Naive thymus-derived CD4-positive, alpha-beta T cell (primary cell): ENCODE measurements at regions of chr13 and their contacts with region 1.

Region 1: GRCh38 chr13:75635828-75636435 is at the start of gene LMO7:
- DNase-seq: peak; percentile 39 to 60 (median 44)
- ATAC-seq: peak; percentile 69
- H3K4me3 ChIP-seq: peak within 1 kb of the TSS; percentile 75
- H3K4me3 Mint-ChIP-seq: peak within 1 kb of the TSS; percentile 77 to 91 (median 85)
- H3K27ac ChIP-seq: peak within 1 kb of the TSS; percentile 34
- H3K27ac Mint-ChIP-seq: peak within 1 kb of the TSS; percentile 38 to 82 (median 71)
- H3K4me1 ChIP-seq: no peaks in the 10 kb centered on the region
- H3K4me1 Mint-ChIP-seq: peaks cover 7 to 23% (median 18%) of the 10 kb centered on the region in 7 donors
- H3K27me3 ChIP-seq: no peaks in the 10 kb centered on the region
- H3K27me3 Mint-ChIP-seq: peaks cover 0 to 21% (median 10%) of the 10 kb centered on the region in 5 donors
- total RNA-seq, gene LMO7: 18.0 to 68.1 (median 45.3) TPM

Region 2: GRCh38 chr13:75365724-75366173 is 270.2 kb before region 1 on chr13:
- CTCF ChIA-PET with region 1: no interaction called
- POLR2A ChIA-PET with region 1: no interaction called
- intact Hi-C with region 1: loop called in 1 of 2 experiments (anchors 5 kb)
- DNase-seq: peak in 1 of 9 donors; percentile 34
- ATAC-seq: peak; percentile 75
- H3K4me3 ChIP-seq: no peak overlapping the region
- H3K4me3 Mint-ChIP-seq: peak overlapping the region in 1 of 10 donors; percentile 72
- H3K27ac ChIP-seq: no peak overlapping the region
- H3K27ac Mint-ChIP-seq: peak overlapping the region in 1 of 9 donors; percentile 86
- H3K4me1 ChIP-seq: no peaks in the 10 kb centered on the region
- H3K4me1 Mint-ChIP-seq: peaks cover 0 to 25% (median 0%) of the 10 kb centered on the region in 7 donors
- H3K27me3 ChIP-seq: no peaks in the 10 kb centered on the region
- H3K27me3 Mint-ChIP-seq: peaks cover 0 to 8% (median 0%) of the 10 kb centered on the region in 5 donors

Region 3: DNA sequence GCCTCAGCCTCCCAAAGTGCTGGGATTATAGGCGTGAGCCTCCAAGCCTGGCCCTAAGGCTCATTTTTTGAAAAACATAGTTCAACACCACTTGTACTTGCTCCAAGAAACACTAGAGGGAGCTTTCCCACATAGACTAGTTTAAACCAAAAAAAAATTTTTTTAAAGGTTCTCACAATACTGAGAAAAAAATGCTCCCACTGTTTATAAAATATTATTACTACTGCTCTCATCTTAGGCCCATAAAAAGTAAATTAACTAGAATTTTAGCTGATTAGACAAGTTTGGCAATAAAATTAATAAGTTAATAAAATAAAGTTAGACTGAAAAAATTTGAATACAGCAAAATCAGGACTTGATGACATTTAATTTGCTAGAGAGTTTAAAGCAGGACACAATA is 263.4 kb before region 1 on chr13:
- CTCF ChIA-PET with region 1: no interaction called
- POLR2A ChIA-PET with region 1: no interaction called
- intact Hi-C with region 1: loop called (anchors 1 to 5 kb)
- DNase-seq: peak in 7 of 9 donors; percentile 15 to 51 (median 38)
- ATAC-seq: peak; percentile 86
- H3K4me3 ChIP-seq: no peak overlapping the region
- H3K4me3 Mint-ChIP-seq: no peak overlapping the region
- H3K27ac ChIP-seq: no peak overlapping the region
- H3K27ac Mint-ChIP-seq: no peak overlapping the region
- H3K4me1 ChIP-seq: no peaks in the 10 kb centered on the region
- H3K4me1 Mint-ChIP-seq: peaks cover 0 to 2% (median 0%) of the 10 kb centered on the region in 7 donors
- H3K27me3 ChIP-seq: no peaks in the 10 kb centered on the region
- H3K27me3 Mint-ChIP-seq: peaks cover 0 to 8% (median 0%) of the 10 kb centered on the region in 5 donors

Region 4: GRCh38 chr13:75482070-75482819 is 153.7 kb before region 1 on chr13 and contains the start of gene TBC1D4:
- CTCF ChIA-PET with region 1: no interaction called
- POLR2A ChIA-PET with region 1: no interaction called
- intact Hi-C with region 1: loop called (anchors 2 to 5 kb)
- DNase-seq: peak in 8 of 9 donors; percentile 19 to 69 (median 22)
- ATAC-seq: peak; percentile 85
- H3K4me3 ChIP-seq: peak within 1 kb of the TSS; percentile 60
- H3K4me3 Mint-ChIP-seq: peak within 1 kb of the TSS; percentile 90 to 99 (median 95)
- H3K27ac ChIP-seq: no peak within 1 kb of the TSS
- H3K27ac Mint-ChIP-seq: peak within 1 kb of the TSS in 1 of 9 donors; percentile 83
- H3K4me1 ChIP-seq: peaks cover 0 to 5% of the 10 kb centered on the region in 2 donors
- H3K4me1 Mint-ChIP-seq: peaks cover 7 to 24% (median 18%) of the 10 kb centered on the region in 7 donors
- H3K27me3 ChIP-seq: peaks cover 12 to 15% of the 10 kb centered on the region in 2 donors
- H3K27me3 Mint-ChIP-seq: peaks cover 57 to 80% (median 74%) of the 10 kb centered on the region in 5 donors
- total RNA-seq, gene TBC1D4: 12.4 to 73.8 (median 42.8) TPM

Region 5: GRCh38 chr13:75537401-75538365 is 98.2 kb before region 1 on chr13 and contains the start of gene COMMD6:
- CTCF ChIA-PET with region 1: no interaction called
- POLR2A ChIA-PET with region 1: interaction called, 3 read pairs
- intact Hi-C with region 1: loop called in 1 of 2 experiments (anchors 2 kb)
- DNase-seq: peak; percentile 46 to 77 (median 65)
- ATAC-seq: peak; percentile 93
- H3K4me3 ChIP-seq: peak within 1 kb of the TSS; percentile 96
- H3K4me3 Mint-ChIP-seq: peak within 1 kb of the TSS; percentile 88 to 100 (median 98)
- H3K27ac ChIP-seq: peak within 1 kb of the TSS; percentile 85
- H3K27ac Mint-ChIP-seq: peak within 1 kb of the TSS; percentile 83 to 98 (median 95)
- H3K4me1 ChIP-seq: peaks cover 12 to 26% of the 10 kb centered on the region in 2 donors
- H3K4me1 Mint-ChIP-seq: peaks cover 28 to 57% (median 45%) of the 10 kb centered on the region in 7 donors
- H3K27me3 ChIP-seq: no peaks in the 10 kb centered on the region
- H3K27me3 Mint-ChIP-seq: no peaks in the 10 kb centered on the region
- total RNA-seq, gene COMMD6: 133 to 241 (median 205) TPM

Region 6: DNA sequence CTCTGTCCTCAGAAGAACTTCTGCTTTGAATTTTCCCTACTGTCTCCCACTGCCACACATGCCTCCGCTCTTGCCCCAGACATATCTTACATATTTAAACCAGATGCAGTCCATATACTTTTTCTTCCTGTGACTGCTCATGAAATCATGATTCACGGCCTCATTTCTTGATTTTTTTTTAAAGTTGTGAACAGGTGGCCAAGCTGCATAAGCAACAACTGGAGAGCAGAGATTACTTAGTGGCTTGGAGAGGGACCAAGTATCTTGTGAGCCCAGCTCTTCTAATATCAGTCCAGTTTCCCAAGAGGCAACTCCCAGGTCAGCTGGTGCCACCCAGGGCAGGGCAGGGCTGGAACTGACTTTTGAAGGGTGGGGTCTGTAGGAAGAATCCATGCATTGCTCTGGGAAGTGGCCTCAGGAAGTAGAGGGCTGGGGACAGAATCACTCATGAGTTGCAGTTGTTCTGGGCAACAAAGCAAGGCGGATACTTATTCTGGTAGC is 152.6 kb after region 1 on chr13:
- CTCF ChIA-PET with region 1: no interaction called
- POLR2A ChIA-PET with region 1: no interaction called
- intact Hi-C with region 1: no loop called
- DNase-seq: no peak
- ATAC-seq: no peak
- H3K4me3 ChIP-seq: no peak overlapping the region
- H3K4me3 Mint-ChIP-seq: no peak overlapping the region
- H3K27ac ChIP-seq: no peak overlapping the region
- H3K27ac Mint-ChIP-seq: no peak overlapping the region
- H3K4me1 ChIP-seq: no peaks in the 10 kb centered on the region
- H3K4me1 Mint-ChIP-seq: peaks cover 0 to 46% (median 29%) of the 10 kb centered on the region in 7 donors
- H3K27me3 ChIP-seq: no peaks in the 10 kb centered on the region
- H3K27me3 Mint-ChIP-seq: no peaks in the 10 kb centered on the region

Region 7: DNA sequence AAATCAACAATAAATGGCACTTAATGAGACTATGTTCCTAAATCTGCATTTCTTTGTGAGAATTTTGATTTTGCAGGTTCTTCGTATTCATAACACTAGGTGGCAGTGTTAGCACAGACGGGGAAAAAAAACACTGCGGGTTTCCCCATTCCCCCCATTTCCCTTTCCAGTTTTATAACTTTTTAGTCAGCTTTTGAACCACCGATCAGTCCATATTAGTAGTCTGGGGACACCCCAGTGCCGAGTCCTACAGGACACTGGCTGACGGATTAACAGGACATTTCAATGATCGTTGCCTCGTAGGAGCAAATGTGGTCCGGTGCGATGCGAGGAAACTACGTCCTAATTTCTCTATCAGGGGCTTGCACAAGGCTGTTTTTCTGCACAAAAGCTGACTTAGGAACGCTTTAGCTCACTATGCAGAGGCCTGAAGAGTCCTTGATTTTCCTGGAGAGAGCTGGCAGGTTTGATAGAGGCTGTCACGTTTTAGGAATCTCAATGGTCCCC is 234.5 kb after region 1 on chr13:
- CTCF ChIA-PET with region 1: interaction called, 3 read pairs
- POLR2A ChIA-PET with region 1: no interaction called
- intact Hi-C with region 1: loop called in 1 of 2 experiments (anchors 5 kb)
- DNase-seq: peak in 6 of 9 donors; percentile 12 to 61 (median 38)
- ATAC-seq: peak; percentile 75
- H3K4me3 ChIP-seq: peak overlapping the region; percentile 50
- H3K4me3 Mint-ChIP-seq: peak overlapping the region; percentile 60 to 85 (median 80)
- H3K27ac ChIP-seq: peak overlapping the region; percentile 52
- H3K27ac Mint-ChIP-seq: peak overlapping the region; percentile 72 to 92 (median 86)
- H3K4me1 ChIP-seq: peaks cover 0 to 13% of the 10 kb centered on the region in 2 donors
- H3K4me1 Mint-ChIP-seq: peaks cover 4 to 29% (median 19%) of the 10 kb centered on the region in 7 donors
- H3K27me3 ChIP-seq: no peaks in the 10 kb centered on the region
- H3K27me3 Mint-ChIP-seq: peaks cover 0 to 13% (median 3%) of the 10 kb centered on the region in 5 donors

Region 8: GRCh38 chr13:76991796-76992547 is 1356.0 kb after region 1 on chr13 and contains the start of gene CLN5:
- CTCF ChIA-PET with region 1: no interaction called
- POLR2A ChIA-PET with region 1: no interaction called
- intact Hi-C with region 1: loop called in 1 of 2 experiments (anchors 5 kb)
- DNase-seq: peak; percentile 93 to 98 (median 96)
- ATAC-seq: peak; percentile 92
- H3K4me3 ChIP-seq: peak within 1 kb of the TSS; percentile 87
- H3K4me3 Mint-ChIP-seq: peak within 1 kb of the TSS; percentile 88 to 99 (median 96)
- H3K27ac ChIP-seq: peak within 1 kb of the TSS; percentile 96
- H3K27ac Mint-ChIP-seq: peak within 1 kb of the TSS; percentile 96 to 99 (median 99)
- H3K4me1 ChIP-seq: peaks cover 12 to 19% of the 10 kb centered on the region in 2 donors
- H3K4me1 Mint-ChIP-seq: peaks cover 27 to 59% (median 53%) of the 10 kb centered on the region in 7 donors
- H3K27me3 ChIP-seq: peaks cover 0 to 3% of the 10 kb centered on the region in 2 donors
- H3K27me3 Mint-ChIP-seq: peaks cover 0 to 12% (median 0%) of the 10 kb centered on the region in 5 donors
- total RNA-seq, gene CLN5: 18.9 to 45.3 (median 27.7) TPM